ENCODE measurements at regions of chr17 and their contacts with region 1.

Region 1: DNA sequence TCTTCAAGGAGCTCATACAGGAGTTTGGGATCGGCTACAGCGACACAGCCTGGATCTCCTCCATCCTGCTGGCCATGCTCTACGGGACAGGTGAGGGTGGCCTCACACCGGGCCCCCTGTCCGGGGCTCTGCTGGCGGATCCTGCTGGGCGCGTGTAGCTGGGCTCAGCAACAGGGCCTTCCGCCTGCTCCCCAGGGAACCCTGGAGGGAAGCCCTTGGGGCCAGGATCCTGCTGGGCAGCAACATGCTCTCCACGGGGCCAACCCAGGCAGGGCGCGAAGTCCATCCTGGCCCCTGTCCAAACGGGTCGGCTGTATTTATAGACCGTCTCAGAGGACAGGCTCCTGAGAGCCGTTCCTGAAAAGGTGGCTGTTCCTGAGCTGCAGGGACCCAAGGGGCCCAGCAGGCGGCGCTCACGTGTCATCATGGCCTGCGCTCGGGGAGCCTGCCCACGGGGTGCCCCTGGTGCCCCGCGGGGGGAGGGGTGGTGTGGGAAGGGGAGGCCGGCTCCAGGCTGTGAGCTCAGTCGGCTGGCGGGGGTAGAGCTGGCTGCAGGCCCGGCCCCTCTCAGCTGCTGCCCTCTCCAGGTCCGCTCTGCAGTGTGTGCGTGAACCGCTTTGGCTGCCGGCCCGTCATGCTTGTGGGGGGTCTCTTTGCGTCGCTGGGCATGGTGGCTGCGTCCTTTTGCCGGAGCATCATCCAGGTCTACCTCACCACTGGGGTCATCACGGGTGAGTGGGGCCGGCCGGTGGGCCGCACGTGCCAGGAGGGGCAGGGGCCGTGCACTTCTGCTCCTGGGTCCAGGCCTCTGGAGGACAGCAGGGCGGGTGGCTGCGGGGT is 7.5 kb downstream of the SLC16A3 start:
- DNase-seq: peak; percentile 78
- H3K4me3 Mint-ChIP-seq: no peak overlapping the region
- H3K27ac Mint-ChIP-seq: no peak overlapping the region
- H3K4me1 Mint-ChIP-seq: peaks cover 30% of the 10 kb centered on the region
- H3K27me3 Mint-ChIP-seq: no peaks in the 10 kb centered on the region

Region 2: GRCh38 chr17:82212331-82213250 is 23.8 kb before region 1 on chr17 and contains the start of gene CCDC57:
- CTCF ChIA-PET with region 1: no interaction called
- intact Hi-C with region 1: loop called (anchors 2 kb)
- DNase-seq: peak; percentile 74
- H3K4me3 Mint-ChIP-seq: peak within 1 kb of the TSS; percentile 79
- H3K27ac Mint-ChIP-seq: peak within 1 kb of the TSS; percentile 53
- H3K4me1 Mint-ChIP-seq: peaks cover 33% of the 10 kb centered on the region
- H3K27me3 Mint-ChIP-seq: no peaks in the 10 kb centered on the region
- total RNA-seq, gene CCDC57: 40.7 to 43.9 TPM

Region 3: GRCh38 chr17:82292251-82293154 is 56.1 kb after region 1 on chr17:
- CTCF ChIA-PET with region 1: no interaction called
- intact Hi-C with region 1: loop called (anchors 1 kb)
- DNase-seq: peak; percentile 96
- H3K4me3 Mint-ChIP-seq: peak overlapping the region; percentile 82
- H3K27ac Mint-ChIP-seq: peak overlapping the region; percentile 85
- H3K4me1 Mint-ChIP-seq: peaks cover 42% of the 10 kb centered on the region
- H3K27me3 Mint-ChIP-seq: no peaks in the 10 kb centered on the region

Region 4: GRCh38 chr17:82320956-82321927 is 84.9 kb after region 1 on chr17:
- CTCF ChIA-PET with region 1: interaction called, 8 read pairs
- intact Hi-C with region 1: loop called (anchors 2 kb)
- DNase-seq: peak; percentile 93
- H3K4me3 Mint-ChIP-seq: peak overlapping the region; percentile 79
- H3K27ac Mint-ChIP-seq: peak overlapping the region; percentile 97
- H3K4me1 Mint-ChIP-seq: peaks cover 42% of the 10 kb centered on the region
- H3K27me3 Mint-ChIP-seq: no peaks in the 10 kb centered on the region

Region 5: DNA sequence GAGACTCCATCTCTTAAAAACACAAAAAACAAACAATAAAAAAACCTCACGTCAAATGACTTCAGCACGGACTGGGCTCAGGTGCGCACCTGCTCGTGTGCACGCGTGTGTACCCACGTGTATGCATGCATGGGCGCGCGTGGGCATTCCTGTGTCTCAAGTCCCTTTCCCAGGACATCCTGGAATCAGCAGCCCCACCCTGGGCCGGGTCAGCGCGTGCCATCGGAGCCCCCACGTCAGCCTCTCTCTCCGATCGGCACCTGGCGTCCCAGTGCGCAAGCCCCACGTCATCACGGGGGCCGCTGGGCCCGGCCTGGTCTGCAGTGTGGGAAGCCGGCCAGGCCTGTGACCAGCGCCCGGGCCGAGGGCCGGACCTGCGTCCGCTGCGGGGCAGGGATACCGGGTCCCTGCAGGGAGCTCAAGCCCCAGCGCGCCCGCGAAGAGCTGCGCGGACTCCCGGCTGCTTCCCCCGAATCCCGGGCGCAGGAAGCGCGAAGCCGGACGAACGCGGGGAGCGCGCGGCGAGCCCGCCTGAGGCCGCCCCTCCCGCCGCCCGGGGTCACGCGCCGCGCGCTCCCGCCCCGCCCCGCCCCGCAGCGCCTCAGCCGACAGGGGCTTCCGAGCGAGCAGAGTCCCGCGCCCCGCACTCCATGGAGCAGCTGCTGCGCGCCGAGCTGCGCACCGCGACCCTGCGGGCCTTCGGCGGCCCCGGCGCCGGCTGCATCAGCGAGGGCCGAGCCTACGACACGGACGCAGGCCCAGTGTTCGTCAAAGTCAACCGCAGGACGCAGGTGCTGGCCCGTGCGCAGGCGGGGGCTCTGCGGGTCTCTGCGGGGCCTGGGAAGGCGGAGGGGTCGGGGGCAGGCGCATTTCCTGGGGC is 498.9 kb after region 1 on chr17 and contains the start of gene FN3K:
- CTCF ChIA-PET with region 1: no interaction called
- intact Hi-C with region 1: no loop called
- DNase-seq: no peak
- H3K4me3 Mint-ChIP-seq: peak within 1 kb of the TSS; percentile 42
- H3K27ac Mint-ChIP-seq: no peak within 1 kb of the TSS
- H3K4me1 Mint-ChIP-seq: peaks cover 5% of the 10 kb centered on the region
- H3K27me3 Mint-ChIP-seq: no peaks in the 10 kb centered on the region
- total RNA-seq, gene FN3K: 1.3 to 1.8 TPM

Measured in activated naive CD4-positive, alpha-beta T cell treated with anti-CD3 and anti-CD28 coated beads for 36 hours (primary cell).